H1 (cell line): ENCODE measurements at regions of chr1 and their contacts with region 1.

Region 1: DNA sequence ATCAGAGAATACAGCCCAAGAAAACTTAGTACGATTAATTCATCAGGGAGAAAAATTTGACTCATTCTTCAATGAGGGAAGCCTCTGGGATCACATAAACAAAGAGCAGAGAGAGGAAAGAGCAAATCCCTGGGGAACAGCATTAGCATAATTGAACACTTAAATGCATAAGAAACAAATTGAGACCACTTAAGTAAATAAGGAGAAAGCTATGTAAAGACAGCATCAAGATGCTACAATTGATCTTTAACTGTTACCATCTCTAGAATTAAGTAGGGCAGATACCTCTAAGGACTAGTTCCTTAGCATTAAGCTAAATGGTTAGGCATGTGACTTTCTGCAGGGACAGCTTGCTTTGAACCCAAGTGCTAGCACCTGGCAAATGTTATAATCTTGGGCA is 265.1 kb upstream of the NEGR1 start:
- DNase-seq: no peak
- H3K4me3 ChIP-seq: peak overlapping the region in 1 of 4 experiments; percentile 0; a peak in 1 of 8 replicates
- H3K27ac ChIP-seq: no peak overlapping the region
- H3K4me1 ChIP-seq: peaks cover 0 to 8% (median 2%) of the 10 kb centered on the region in 4 experiments; a peak in 2 of 7 replicates
- H3K27me3 ChIP-seq: no peaks in the 10 kb centered on the region
- CTCF ChIP-seq: no peak
- EP300 ChIP-seq: no peak
- POLR2A ChIP-seq: no peak
- RAD21 ChIP-seq: no peak

Region 2: GRCh38 chr1:72557446-72558049 is 10.1 kb after region 1 on chr1:
- CTCF ChIA-PET with region 1: interaction called, 13 read pairs
- POLR2A ChIA-PET with region 1: no interaction called
- DNase-seq: no peak
- H3K4me3 ChIP-seq: no peak overlapping the region
- H3K27ac ChIP-seq: no peak overlapping the region
- H3K4me1 ChIP-seq: peaks cover 0 to 6% (median 0%) of the 10 kb centered on the region in 4 experiments; a peak in 2 of 7 replicates
- H3K27me3 ChIP-seq: no peaks in the 10 kb centered on the region
- CTCF ChIP-seq: peak; percentile 17 to 72 (median 45); a peak in 3 of 4 replicates
- EP300 ChIP-seq: no peak
- POLR2A ChIP-seq: no peak
- RAD21 ChIP-seq: peak; percentile 52 to 66

Region 3: GRCh38 chr1:72579629-72580028 is 32.2 kb after region 1 on chr1:
- CTCF ChIA-PET with region 1: no interaction called
- POLR2A ChIA-PET with region 1: no interaction called
- DNase-seq: no peak
- H3K4me3 ChIP-seq: no peak overlapping the region
- H3K27ac ChIP-seq: no peak overlapping the region
- H3K4me1 ChIP-seq: no peaks in the 10 kb centered on the region
- H3K27me3 ChIP-seq: no peaks in the 10 kb centered on the region
- CTCF ChIP-seq: no peak
- EP300 ChIP-seq: no peak
- POLR2A ChIP-seq: no peak
- RAD21 ChIP-seq: no peak